GM12878 (cell line): ENCODE measurements at regions of chr7 and their contacts with region 1.

Region 1: DNA sequence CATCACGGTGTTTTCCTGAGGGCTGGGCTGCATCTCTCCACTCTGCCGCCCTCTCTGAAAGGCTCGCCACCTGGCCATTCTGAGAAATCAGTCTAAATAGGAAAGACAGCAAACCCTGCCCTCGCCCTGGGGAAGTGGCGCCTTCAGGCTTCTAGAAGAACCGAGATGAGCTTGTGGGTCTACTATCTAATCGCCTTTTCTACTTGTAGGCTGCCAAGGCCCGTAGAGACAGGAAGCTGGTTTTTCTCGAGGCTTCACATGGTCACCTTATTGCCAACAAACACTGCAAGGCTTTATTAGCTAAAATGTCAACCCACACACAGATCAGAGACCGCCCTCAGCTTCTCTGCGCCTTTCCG is 21.4 kb downstream of the LAT2 start:
- DNase-seq: peak; percentile 78
- ATAC-seq: peak; percentile 88
- H3K4me3 ChIP-seq: no peak overlapping the region
- H3K27ac ChIP-seq: peak overlapping the region; percentile 77
- H3K4me1 ChIP-seq: peaks cover 42% of the 10 kb centered on the region
- H3K27me3 ChIP-seq: no peaks in the 10 kb centered on the region
- CTCF ChIP-seq: no peak
- EP300 ChIP-seq: no peak
- POLR2A ChIP-seq: peak; percentile 35
- RAD21 ChIP-seq: no peak; the same call in 1 of the 2 replicates

Region 2: GRCh38 chr7:74212656-74213055 is 18.6 kb before region 1 on chr7:
- CTCF ChIA-PET with region 1: interaction called, 34 read pairs
- POLR2A ChIA-PET with region 1: interaction called, 37 read pairs
- RAD21 ChIA-PET with region 1: interaction called, 36 read pairs
- SMC1A ChIA-PET with region 1: interaction called, 30 read pairs
- in situ Hi-C with region 1: no loop called
- intact Hi-C with region 1: no loop called
- DNase-seq: no peak
- ATAC-seq: no peak
- H3K4me3 ChIP-seq: peak overlapping the region; percentile 96
- H3K27ac ChIP-seq: peak overlapping the region; percentile 94
- H3K4me1 ChIP-seq: peaks cover 38% of the 10 kb centered on the region
- H3K27me3 ChIP-seq: no peaks in the 10 kb centered on the region
- CTCF ChIP-seq: no peak
- EP300 ChIP-seq: no peak
- POLR2A ChIP-seq: peak; percentile 49; the same call in 1 of the 2 replicates
- RAD21 ChIP-seq: no peak